ENCODE measurements at regions of chr13 and their contacts with region 1.

Region 1: GRCh38 chr13:98445340-98446233 is 131.3 kb downstream of the STK24 start:
- DNase-seq: no peak

Region 2: DNA sequence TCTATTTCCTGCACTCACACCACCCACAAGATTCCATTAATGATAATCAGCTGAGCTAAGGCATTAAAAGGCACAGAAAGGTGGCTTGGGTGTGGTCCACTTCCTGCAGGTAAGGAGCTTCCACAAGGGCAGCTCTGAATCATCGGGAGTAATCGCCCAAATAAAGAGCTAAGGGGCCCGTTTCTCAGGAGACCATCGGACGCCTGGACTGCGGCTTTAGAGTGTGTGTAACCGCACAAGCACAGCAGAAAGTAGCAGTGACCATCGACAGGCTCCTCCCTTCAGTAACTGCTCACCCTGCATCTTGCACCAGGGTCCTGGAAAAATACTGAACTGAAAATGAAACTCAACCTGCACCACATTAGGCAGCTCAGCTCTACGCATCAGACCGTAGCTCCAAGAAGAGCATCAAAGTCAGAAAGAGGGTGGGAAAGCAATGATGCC is 125.4 kb after region 1 on chr13:
- intact Hi-C with region 1: loop called (anchors 5 kb)
- DNase-seq: no peak

Region 3: DNA sequence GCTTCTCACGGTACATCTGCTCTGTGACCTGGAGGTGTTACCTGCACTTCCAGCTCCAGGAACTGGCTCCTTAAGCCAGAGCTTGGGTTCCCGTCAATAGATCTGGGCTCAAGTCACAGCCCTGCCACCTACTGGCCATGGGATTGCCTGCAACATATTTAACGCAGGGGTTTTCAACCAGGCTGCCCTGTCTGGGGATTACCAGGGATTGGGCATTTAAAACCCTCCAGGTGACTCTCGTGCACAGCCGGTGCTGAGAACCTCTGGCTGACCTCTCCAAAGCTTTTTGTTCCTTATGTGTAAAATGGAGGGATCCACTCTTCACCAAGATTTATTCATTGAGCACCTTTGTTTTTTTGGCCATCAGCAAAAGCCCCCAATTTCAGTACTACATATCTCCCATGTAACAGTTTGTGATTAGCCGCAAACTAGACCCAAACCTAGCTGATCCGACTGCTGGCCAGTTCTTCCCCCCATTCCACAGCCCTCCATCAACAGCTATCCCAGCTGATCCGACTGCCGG is 207.9 kb after region 1 on chr13:
- intact Hi-C with region 1: loop called (anchors 2 kb)
- DNase-seq: peak; percentile 87

Region 4: DNA sequence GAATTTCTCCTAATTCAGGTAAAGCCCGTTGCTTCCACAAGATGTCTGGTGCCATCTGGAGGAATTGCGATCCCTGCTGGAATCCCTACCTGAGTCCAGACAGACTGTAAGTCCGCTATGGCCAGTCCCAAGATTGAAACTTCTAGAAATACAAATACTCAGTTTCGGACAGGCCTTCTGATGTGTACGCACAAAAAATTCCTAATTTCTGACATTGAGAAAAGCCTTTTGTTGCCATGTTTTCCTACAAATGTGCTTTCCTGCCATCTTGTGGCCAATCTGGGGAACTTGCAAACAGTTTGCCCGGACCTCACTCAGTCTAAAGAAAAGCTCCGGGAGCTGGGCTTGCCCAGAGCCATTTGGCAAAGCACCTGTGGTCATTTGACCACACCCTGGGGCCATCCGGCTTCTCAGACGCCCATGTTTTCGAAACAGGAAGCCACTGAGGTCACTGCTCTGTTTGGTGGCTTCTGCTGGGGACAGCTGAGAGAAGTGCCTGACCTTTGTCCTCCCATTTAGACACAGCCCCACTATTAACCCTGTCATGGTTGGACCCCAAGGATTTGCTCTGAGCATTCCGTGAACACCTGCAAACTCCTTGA is 227.5 kb after region 1 on chr13:
- intact Hi-C with region 1: loop called (anchors 2 kb)
- DNase-seq: peak; percentile 80

Region 5: GRCh38 chr13:98842864-98843481 is 397.4 kb after region 1 on chr13:
- intact Hi-C with region 1: loop called (anchors 10 kb)
- DNase-seq: peak; percentile 86

Measured in cardiac septum (tissue), 1 donor.